Heart right ventricle (tissue), 16 donors: ENCODE measurements at regions of chr1 and their contacts with region 1.

Region 1: GRCh38 chr1:23627069-23627735 is 64.4 kb upstream of the RPL11 start:
- DNase-seq: no peak
- ATAC-seq: no peak
- H3K4me3 ChIP-seq: no peak overlapping the region
- H3K27ac ChIP-seq: no peak overlapping the region
- H3K4me1 ChIP-seq: no peaks in the 10 kb centered on the region
- H3K27me3 ChIP-seq: no peaks in the 10 kb centered on the region
- CTCF ChIP-seq: no peak

Region 2: DNA sequence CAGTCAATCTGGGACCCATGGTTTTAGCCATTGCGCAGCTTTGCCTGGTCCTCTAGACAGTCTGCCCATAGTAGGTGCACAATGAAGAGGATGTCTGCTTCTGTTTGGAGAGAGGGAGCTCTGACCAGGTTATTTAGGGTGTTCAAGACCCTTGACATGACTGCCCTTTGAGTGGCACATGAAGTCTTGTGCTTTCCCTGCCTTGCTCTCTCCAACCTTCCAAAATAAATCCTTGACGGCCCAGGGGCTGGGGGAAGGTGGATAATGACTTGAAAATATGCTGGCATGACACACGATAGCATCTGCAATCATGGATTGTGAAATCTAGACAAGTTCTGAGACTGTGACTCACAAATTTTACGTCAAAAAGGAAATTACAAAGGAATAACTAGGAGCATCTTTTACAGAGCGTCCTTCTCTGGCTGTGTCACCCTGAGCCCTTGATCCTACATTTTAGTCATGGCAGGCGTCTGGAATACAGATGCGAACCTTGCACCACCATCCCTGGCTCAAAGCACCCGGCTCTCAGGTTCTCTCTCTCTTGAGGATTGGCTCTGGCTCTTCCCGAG is 41.7 kb before region 1 on chr1:
- intact Hi-C with region 1: loop called in 3 of 10 experiments (anchors 5 kb)
- DNase-seq: no peak
- ATAC-seq: peak in 1 of 8 donors; percentile 36
- H3K4me3 ChIP-seq: no peak overlapping the region
- H3K27ac ChIP-seq: peak overlapping the region in 1 of 10 donors; percentile 44
- H3K4me1 ChIP-seq: peaks cover 0 to 30% (median 6%) of the 10 kb centered on the region in 9 donors
- H3K27me3 ChIP-seq: no peaks in the 10 kb centered on the region
- CTCF ChIP-seq: no peak

Region 3: DNA sequence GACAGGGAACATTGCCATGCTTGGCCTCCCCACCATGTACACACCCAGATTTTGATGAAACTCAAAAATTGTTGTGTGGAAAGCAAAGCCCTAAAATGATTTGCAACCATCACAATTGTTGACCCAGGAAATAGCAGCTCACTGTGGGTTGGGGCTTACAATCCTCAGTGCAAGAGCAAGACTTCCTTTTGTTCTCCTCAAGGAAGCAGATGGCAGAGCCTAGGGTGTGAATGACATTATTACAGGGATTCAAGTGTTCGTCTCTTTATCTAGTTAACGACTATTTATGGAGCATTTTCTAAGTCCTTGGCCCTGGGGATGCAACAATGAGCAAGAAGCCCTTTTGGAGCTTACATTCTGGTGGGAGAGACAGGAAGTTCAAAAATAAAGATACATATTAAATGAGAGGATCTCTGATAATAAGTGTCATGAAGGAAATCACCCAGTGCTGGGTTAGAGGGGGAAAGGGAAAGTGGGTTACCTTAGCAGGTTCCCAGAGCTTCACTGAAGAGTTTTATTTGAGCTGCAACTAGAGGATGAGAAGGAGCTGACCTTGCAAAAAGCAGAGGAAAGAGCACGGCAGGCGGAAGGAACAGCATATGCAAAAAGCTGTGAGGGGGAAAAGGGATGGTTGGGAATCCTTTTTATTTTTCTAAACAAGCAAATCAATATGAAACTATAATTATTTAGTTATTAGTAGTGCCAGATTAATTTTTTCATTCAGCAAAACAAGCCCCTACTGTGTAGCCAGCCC is 29.4 kb before region 1 on chr1:
- intact Hi-C with region 1: loop called in 3 of 10 experiments (anchors 2 to 5 kb)
- DNase-seq: no peak
- ATAC-seq: peak in 2 of 8 donors; percentile 20 to 25
- H3K4me3 ChIP-seq: no peak overlapping the region
- H3K27ac ChIP-seq: peak overlapping the region in 3 of 10 donors; percentile 6 to 40 (median 13)
- H3K4me1 ChIP-seq: peaks cover 0 to 44% (median 15%) of the 10 kb centered on the region in 9 donors
- H3K27me3 ChIP-seq: no peaks in the 10 kb centered on the region
- CTCF ChIP-seq: no peak

Region 4: GRCh38 chr1:23727362-23727827 is 100.2 kb after region 1 on chr1:
- intact Hi-C with region 1: no loop called
- DNase-seq: peak in 1 of 2 donors; percentile 63
- ATAC-seq: peak in 7 of 8 donors; percentile 55 to 97 (median 80)
- H3K4me3 ChIP-seq: no peak overlapping the region
- H3K27ac ChIP-seq: peak overlapping the region in 1 of 10 donors; percentile 64
- H3K4me1 ChIP-seq: peaks cover 0 to 25% (median 0%) of the 10 kb centered on the region in 9 donors
- H3K27me3 ChIP-seq: no peaks in the 10 kb centered on the region
- CTCF ChIP-seq: no peak

Region 5: GRCh38 chr1:24126018-24126671 is 498.9 kb after region 1 on chr1:
- intact Hi-C with region 1: no loop called
- DNase-seq: peak in 1 of 2 donors; percentile 43
- ATAC-seq: peak; percentile 44 to 90 (median 78)
- H3K4me3 ChIP-seq: no peak overlapping the region
- H3K27ac ChIP-seq: peak overlapping the region in 9 of 10 donors; percentile 25 to 80 (median 67)
- H3K4me1 ChIP-seq: peaks cover 0 to 16% (median 11%) of the 10 kb centered on the region in 9 donors
- H3K27me3 ChIP-seq: no peaks in the 10 kb centered on the region
- CTCF ChIP-seq: no peak